ENCODE measurements at regions of chr15 and their contacts with region 1.

Region 1: GRCh38 chr15:39580117-39580484 is 778 bp upstream of the THBS1 start:
- DNase-seq: peak; percentile 60 to 94
- H3K4me3 ChIP-seq: peak overlapping the region; percentile 70
- H3K27ac ChIP-seq: peak overlapping the region; percentile 62
- H3K4me1 ChIP-seq: peaks cover 22% of the 10 kb centered on the region; the same call in 1 of the 2 replicates
- H3K27me3 ChIP-seq: no peaks in the 10 kb centered on the region
- CTCF ChIP-seq: peak; percentile 86

Region 2: DNA sequence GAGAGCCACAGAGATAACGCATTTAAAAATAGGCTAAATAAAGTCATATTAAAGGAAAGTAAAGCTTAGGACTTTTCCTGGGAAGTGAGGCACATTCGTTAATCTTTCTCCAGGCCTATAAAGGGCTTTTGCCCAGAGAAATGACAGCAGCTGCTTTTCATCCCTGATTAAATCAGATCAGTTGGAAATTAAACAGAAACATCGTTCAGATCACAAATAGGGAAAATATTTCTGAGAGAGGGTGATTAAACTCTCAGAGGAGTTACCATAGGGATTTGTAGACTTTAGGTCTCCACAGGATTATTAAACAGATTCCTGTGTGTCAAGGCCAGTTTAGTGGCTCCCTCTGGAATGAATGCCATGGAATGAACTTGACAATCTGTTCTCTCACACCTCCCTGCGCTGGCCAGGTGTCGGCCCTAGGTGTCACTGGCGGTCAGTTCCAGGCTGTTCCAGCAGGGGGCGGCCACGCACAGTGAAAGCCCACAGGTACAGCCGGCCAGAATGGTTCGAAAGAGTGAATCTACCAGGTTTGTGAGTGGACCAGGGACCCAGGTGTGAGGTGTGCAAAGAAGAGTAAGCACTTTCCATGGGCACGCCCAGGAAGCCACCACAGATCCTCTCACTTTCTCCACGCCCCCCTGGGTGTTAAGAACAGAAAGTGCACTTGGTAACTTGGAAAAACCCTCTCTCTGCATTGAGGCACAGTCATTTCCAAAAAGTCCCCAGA is 762.5 kb before region 1 on chr15:
- CTCF ChIA-PET with region 1: no interaction called
- POLR2A ChIA-PET with region 1: no interaction called
- intact Hi-C with region 1: loop called (anchors 1 kb)
- DNase-seq: peak; percentile 56 to 93
- H3K4me3 ChIP-seq: no peak overlapping the region
- H3K27ac ChIP-seq: no peak overlapping the region
- H3K4me1 ChIP-seq: no peaks in the 10 kb centered on the region
- H3K27me3 ChIP-seq: no peaks in the 10 kb centered on the region
- CTCF ChIP-seq: peak; percentile 93

Region 3: DNA sequence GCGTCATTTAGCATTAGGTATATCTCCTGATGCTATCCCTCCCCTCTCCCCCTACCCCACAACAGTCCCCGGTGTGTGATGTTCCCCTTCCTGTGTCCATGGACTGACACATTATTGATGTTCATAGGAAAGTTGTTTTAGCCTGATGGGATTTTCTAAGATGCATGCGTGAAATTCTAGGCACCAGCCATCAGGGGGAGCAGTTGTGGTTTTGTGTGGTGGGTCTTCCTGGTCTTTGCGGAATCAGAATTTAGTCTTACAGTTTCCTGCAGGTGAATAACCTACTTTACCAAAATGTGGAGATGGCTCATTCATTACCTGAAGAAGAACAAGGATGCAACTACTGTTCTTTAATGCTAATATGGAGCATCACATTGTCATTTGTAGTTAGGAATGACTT is 454.2 kb before region 1 on chr15:
- CTCF ChIA-PET with region 1: no interaction called
- POLR2A ChIA-PET with region 1: interaction called, 8 read pairs
- intact Hi-C with region 1: loop called (anchors 1 kb)
- DNase-seq: peak in 1 of 2 experiments; percentile 22
- H3K4me3 ChIP-seq: no peak overlapping the region
- H3K27ac ChIP-seq: no peak overlapping the region
- H3K4me1 ChIP-seq: peaks cover 74% of the 10 kb centered on the region
- H3K27me3 ChIP-seq: no peaks in the 10 kb centered on the region
- CTCF ChIP-seq: peak; percentile 51; the same call in 1 of the 2 replicates

Region 4: GRCh38 chr15:39195988-39196486 is 384.1 kb before region 1 on chr15:
- CTCF ChIA-PET with region 1: no interaction called
- POLR2A ChIA-PET with region 1: interaction called, 12 read pairs
- intact Hi-C with region 1: loop called (anchors 1 kb)
- DNase-seq: peak; percentile 86 to 97
- H3K4me3 ChIP-seq: no peak overlapping the region
- H3K27ac ChIP-seq: peak overlapping the region; percentile 79
- H3K4me1 ChIP-seq: peaks cover 32% of the 10 kb centered on the region
- H3K27me3 ChIP-seq: no peaks in the 10 kb centered on the region
- CTCF ChIP-seq: no peak

Region 5: GRCh38 chr15:39301589-39301999 is 278.5 kb before region 1 on chr15:
- CTCF ChIA-PET with region 1: no interaction called
- POLR2A ChIA-PET with region 1: interaction called, 4 read pairs
- intact Hi-C with region 1: loop called (anchors 1 kb)
- DNase-seq: no peak
- H3K4me3 ChIP-seq: no peak overlapping the region
- H3K27ac ChIP-seq: no peak overlapping the region
- H3K4me1 ChIP-seq: peaks cover 20% of the 10 kb centered on the region
- H3K27me3 ChIP-seq: no peaks in the 10 kb centered on the region
- CTCF ChIP-seq: no peak

Region 6: DNA sequence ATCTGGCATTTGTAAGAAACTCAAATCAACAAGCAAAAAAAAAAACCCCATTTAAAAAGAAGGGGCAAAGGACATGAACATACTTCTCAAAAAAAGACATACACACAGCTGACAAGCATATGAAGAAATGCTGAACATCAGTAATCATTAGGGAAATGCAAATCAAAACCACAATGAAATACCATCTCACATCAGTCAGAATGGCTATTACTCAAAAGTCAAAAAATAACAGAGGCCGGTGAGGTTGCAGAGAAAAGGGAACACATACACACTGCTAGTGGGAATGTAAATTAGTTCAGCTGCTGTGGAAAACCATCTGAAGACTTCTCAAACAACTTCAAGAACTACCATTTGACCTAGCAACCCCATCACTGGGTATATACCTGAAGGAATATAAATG is 198.6 kb before region 1 on chr15:
- CTCF ChIA-PET with region 1: no interaction called
- POLR2A ChIA-PET with region 1: no interaction called
- intact Hi-C with region 1: no loop called
- DNase-seq: no peak
- H3K4me3 ChIP-seq: no peak overlapping the region
- H3K27ac ChIP-seq: no peak overlapping the region
- H3K4me1 ChIP-seq: no peaks in the 10 kb centered on the region
- H3K27me3 ChIP-seq: no peaks in the 10 kb centered on the region
- CTCF ChIP-seq: no peak

Region 7: DNA sequence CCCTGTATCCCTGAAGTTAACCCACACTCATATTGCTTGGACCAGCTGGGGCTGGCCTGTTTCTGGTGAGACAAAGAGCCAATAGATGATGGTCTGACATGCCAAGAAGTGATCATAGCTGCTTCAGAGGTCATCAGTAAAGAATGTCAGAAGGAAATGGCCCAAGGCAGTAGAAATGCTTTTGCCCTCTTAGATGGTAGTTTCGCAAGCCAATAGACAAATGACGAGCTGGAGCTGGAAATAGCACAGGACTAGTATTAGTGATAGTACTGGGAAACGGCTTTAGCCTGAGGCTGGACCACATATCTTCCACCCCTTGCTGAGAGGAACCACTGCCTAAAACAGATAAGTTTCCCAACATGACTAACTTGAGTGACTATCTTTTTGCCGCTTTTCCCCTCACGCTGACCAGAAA is 175.3 kb before region 1 on chr15:
- CTCF ChIA-PET with region 1: no interaction called
- POLR2A ChIA-PET with region 1: interaction called, 5 read pairs
- intact Hi-C with region 1: loop called (anchors 1 kb)
- DNase-seq: peak; percentile 70 to 95
- H3K4me3 ChIP-seq: no peak overlapping the region
- H3K27ac ChIP-seq: no peak overlapping the region
- H3K4me1 ChIP-seq: peaks cover 32% of the 10 kb centered on the region
- H3K27me3 ChIP-seq: no peaks in the 10 kb centered on the region
- CTCF ChIP-seq: no peak